Mammary epithelial cell (primary cell): ENCODE measurements at regions of chr15 and their contacts with region 1.

Region 1: GRCh38 chr15:39573844-39574243 is 7.0 kb upstream of the THBS1 start:
- DNase-seq: no peak
- H3K4me3 ChIP-seq: no peak overlapping the region
- H3K27ac ChIP-seq: no peak overlapping the region
- H3K4me1 ChIP-seq: peaks cover 6% of the 10 kb centered on the region
- H3K27me3 ChIP-seq: no peaks in the 10 kb centered on the region
- CTCF ChIP-seq: no peak

Region 2: GRCh38 chr15:39028069-39028468 is 545.8 kb before region 1 on chr15:
- CTCF ChIA-PET with region 1: interaction called, 15 read pairs
- dilution Hi-C with region 1: no loop called
- in situ Hi-C with region 1: no loop called
- intact Hi-C with region 1: no loop called
- DNase-seq: peak; percentile 66
- H3K4me3 ChIP-seq: no peak overlapping the region
- H3K27ac ChIP-seq: no peak overlapping the region
- H3K4me1 ChIP-seq: peaks cover 5% of the 10 kb centered on the region
- H3K27me3 ChIP-seq: no peaks in the 10 kb centered on the region
- CTCF ChIP-seq: no peak

Region 3: DNA sequence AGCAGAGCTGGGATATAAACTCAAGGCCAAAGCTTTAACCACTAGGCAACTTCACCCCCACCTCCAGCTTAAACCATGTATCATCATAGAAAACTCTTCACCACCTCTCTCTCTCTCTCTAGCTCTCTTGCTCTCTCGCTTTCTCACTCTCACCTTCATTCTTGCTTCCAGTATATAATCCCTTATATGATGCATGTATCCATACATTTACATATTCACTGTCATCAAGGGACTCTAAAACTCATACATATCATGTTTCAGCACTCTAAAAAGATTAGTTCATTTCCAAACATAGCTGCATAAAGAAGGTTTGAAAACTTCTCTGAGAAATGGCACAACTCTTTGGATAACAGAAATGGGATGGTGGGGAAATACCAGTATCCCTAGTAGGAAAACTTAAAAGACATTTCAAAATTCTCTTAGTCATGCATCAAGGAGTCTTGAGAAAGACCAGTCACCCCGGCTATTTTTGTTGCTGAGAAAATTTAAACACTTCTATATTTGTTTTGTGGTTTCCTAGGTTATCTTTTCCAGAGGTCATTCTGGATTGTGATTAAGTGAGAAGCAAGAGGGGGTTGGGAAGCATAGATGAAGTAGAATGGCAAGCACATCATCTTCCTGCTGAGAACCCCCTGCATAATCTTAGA is 440.8 kb before region 1 on chr15:
- CTCF ChIA-PET with region 1: no interaction called
- dilution Hi-C with region 1: loop called (anchors 5 kb)
- in situ Hi-C with region 1: no loop called
- intact Hi-C with region 1: no loop called
- DNase-seq: peak; percentile 64
- H3K4me3 ChIP-seq: no peak overlapping the region
- H3K27ac ChIP-seq: no peak overlapping the region
- H3K4me1 ChIP-seq: peaks cover 46% of the 10 kb centered on the region
- H3K27me3 ChIP-seq: no peaks in the 10 kb centered on the region
- CTCF ChIP-seq: no peak

Region 4: GRCh38 chr15:39327005-39327730 is 246.7 kb before region 1 on chr15:
- CTCF ChIA-PET with region 1: no interaction called
- dilution Hi-C with region 1: no loop called
- in situ Hi-C with region 1: no loop called
- intact Hi-C with region 1: no loop called
- DNase-seq: no peak
- H3K4me3 ChIP-seq: no peak overlapping the region
- H3K27ac ChIP-seq: no peak overlapping the region
- H3K4me1 ChIP-seq: peaks cover 13% of the 10 kb centered on the region
- H3K27me3 ChIP-seq: no peaks in the 10 kb centered on the region
- CTCF ChIP-seq: no peak

Region 5: GRCh38 chr15:39411102-39411989 is 162.5 kb before region 1 on chr15:
- CTCF ChIA-PET with region 1: no interaction called
- dilution Hi-C with region 1: loop called (anchors 5 kb)
- in situ Hi-C with region 1: no loop called
- intact Hi-C with region 1: no loop called
- DNase-seq: peak; percentile 90
- H3K4me3 ChIP-seq: no peak overlapping the region
- H3K27ac ChIP-seq: peak overlapping the region; percentile 55
- H3K4me1 ChIP-seq: peaks cover 32% of the 10 kb centered on the region
- H3K27me3 ChIP-seq: no peaks in the 10 kb centered on the region
- CTCF ChIP-seq: no peak

Region 6: GRCh38 chr15:39504808-39505207 is 69.0 kb before region 1 on chr15:
- CTCF ChIA-PET with region 1: no interaction called
- dilution Hi-C with region 1: loop called (anchors 5 kb)
- in situ Hi-C with region 1: no loop called
- intact Hi-C with region 1: loop called (anchors 5 kb)
- DNase-seq: peak; percentile 80
- H3K4me3 ChIP-seq: no peak overlapping the region
- H3K27ac ChIP-seq: no peak overlapping the region
- H3K4me1 ChIP-seq: peaks cover 24% of the 10 kb centered on the region
- H3K27me3 ChIP-seq: no peaks in the 10 kb centered on the region
- CTCF ChIP-seq: no peak

Region 7: GRCh38 chr15:39908186-39908585 is 334.3 kb after region 1 on chr15:
- CTCF ChIA-PET with region 1: no interaction called
- dilution Hi-C with region 1: no loop called
- in situ Hi-C with region 1: no loop called
- intact Hi-C with region 1: no loop called
- DNase-seq: peak; percentile 92
- H3K4me3 ChIP-seq: no peak overlapping the region
- H3K27ac ChIP-seq: peak overlapping the region; percentile 37
- H3K4me1 ChIP-seq: peaks cover 31% of the 10 kb centered on the region
- H3K27me3 ChIP-seq: no peaks in the 10 kb centered on the region
- CTCF ChIP-seq: no peak